ENCODE measurements at regions of chr16 and their contacts with region 1.

Region 1: DNA sequence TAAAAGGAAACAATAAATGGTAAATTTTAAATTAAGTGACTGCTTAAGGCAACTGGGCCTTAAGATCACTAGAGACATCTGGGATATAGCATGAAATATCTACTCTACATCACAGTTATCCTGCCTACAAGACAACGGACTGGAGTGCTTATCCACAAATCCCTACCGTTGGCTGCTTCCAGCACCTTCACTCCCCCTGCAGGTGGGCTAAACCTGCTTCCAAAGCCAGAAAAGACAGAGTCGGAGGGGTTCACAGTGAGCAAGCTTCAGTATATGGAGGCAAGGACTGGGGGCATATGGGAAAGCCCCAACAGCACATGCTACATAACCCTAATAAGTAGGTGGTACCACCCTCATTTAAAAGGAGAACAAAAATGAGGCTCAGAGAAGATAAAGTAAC is 45.3 kb downstream of the GRIN2A start:
- DNase-seq: no peak
- H3K4me3 ChIP-seq: no peak overlapping the region
- H3K27ac ChIP-seq: no peak overlapping the region
- H3K4me1 ChIP-seq: no peaks in the 10 kb centered on the region
- H3K27me3 ChIP-seq: no peaks in the 10 kb centered on the region
- CTCF ChIP-seq: no peak
- POLR2A ChIP-seq: no peak

Region 2: GRCh38 chr16:9854675-9855074 is 282.2 kb before region 1 on chr16:
- intact Hi-C with region 1: loop called (anchors 5 kb)
- DNase-seq: no peak
- H3K4me3 ChIP-seq: no peak overlapping the region
- H3K27ac ChIP-seq: no peak overlapping the region
- H3K4me1 ChIP-seq: no peaks in the 10 kb centered on the region
- H3K27me3 ChIP-seq: no peaks in the 10 kb centered on the region
- CTCF ChIP-seq: no peak
- POLR2A ChIP-seq: no peak

Region 3: GRCh38 chr16:10103118-10103517 is 33.8 kb before region 1 on chr16:
- intact Hi-C with region 1: no loop called
- DNase-seq: no peak
- H3K4me3 ChIP-seq: no peak overlapping the region
- H3K27ac ChIP-seq: no peak overlapping the region
- H3K4me1 ChIP-seq: no peaks in the 10 kb centered on the region
- H3K27me3 ChIP-seq: no peaks in the 10 kb centered on the region
- CTCF ChIP-seq: no peak
- POLR2A ChIP-seq: no peak

Region 4: GRCh38 chr16:10929853-10930754 is 793.2 kb after region 1 on chr16:
- intact Hi-C with region 1: no loop called
- DNase-seq: no peak
- H3K4me3 ChIP-seq: no peak overlapping the region
- H3K27ac ChIP-seq: peak overlapping the region in 1 of 2 donors; percentile 27
- H3K4me1 ChIP-seq: peaks cover 0 to 3% of the 10 kb centered on the region in 2 donors
- H3K27me3 ChIP-seq: no peaks in the 10 kb centered on the region
- CTCF ChIP-seq: no peak
- POLR2A ChIP-seq: no peak

Measured in breast epithelium (tissue), 4 donors.